Prostate gland (tissue), 2 donors: ENCODE measurements at regions of chr11 and their contacts with region 1.

Region 1: GRCh38 chr11:19679952-19680828 is 32.4 kb upstream of the NAV2 start:
- DNase-seq: peak; percentile 77
- H3K4me3 ChIP-seq: no peak overlapping the region
- H3K27ac ChIP-seq: peak overlapping the region; percentile 61 to 64
- H3K4me1 ChIP-seq: no peaks in the 10 kb centered on the region
- H3K27me3 ChIP-seq: no peaks in the 10 kb centered on the region
- CTCF ChIP-seq: peak in 1 of 4 experiments; percentile 47
- POLR2A ChIP-seq: peak; percentile 36

Region 2: DNA sequence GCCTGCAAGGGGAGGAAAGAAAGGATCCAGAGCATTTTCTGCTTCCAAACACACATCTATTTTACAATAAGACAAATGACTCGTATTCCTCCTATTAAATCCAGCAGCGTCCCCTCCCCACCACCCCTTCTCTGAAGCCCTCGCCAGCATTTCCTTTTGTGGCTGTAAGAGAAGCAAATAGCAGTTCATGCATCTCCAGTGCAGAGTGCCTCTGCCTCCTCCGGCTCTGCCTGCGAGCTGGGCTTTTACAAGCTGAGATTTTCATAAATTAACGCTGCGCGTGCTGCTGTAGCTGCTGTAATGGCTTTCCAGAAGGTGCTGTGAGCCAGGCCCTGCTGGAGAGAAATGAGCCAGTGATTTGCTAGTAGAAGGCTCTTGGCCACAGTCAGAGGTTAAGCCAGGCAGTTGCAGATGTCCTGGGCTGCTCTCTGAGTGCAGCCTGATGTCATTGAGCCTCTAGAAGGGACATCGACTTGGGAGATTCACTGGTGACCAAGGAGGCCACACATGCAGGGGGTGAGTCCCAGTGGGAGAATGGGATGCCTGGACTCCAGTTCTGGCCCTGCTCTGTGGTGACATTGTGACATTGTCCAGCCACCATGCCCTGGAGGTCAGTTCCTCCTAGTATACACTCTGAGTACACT is 102.1 kb before region 1 on chr11:
- intact Hi-C with region 1: loop called (anchors 5 kb)
- DNase-seq: peak; percentile 58
- H3K4me3 ChIP-seq: no peak overlapping the region
- H3K27ac ChIP-seq: peak overlapping the region; percentile 72 to 78
- H3K4me1 ChIP-seq: peaks cover 9% of the 10 kb centered on the region
- H3K27me3 ChIP-seq: no peaks in the 10 kb centered on the region
- CTCF ChIP-seq: no peak
- POLR2A ChIP-seq: no peak

Region 3: DNA sequence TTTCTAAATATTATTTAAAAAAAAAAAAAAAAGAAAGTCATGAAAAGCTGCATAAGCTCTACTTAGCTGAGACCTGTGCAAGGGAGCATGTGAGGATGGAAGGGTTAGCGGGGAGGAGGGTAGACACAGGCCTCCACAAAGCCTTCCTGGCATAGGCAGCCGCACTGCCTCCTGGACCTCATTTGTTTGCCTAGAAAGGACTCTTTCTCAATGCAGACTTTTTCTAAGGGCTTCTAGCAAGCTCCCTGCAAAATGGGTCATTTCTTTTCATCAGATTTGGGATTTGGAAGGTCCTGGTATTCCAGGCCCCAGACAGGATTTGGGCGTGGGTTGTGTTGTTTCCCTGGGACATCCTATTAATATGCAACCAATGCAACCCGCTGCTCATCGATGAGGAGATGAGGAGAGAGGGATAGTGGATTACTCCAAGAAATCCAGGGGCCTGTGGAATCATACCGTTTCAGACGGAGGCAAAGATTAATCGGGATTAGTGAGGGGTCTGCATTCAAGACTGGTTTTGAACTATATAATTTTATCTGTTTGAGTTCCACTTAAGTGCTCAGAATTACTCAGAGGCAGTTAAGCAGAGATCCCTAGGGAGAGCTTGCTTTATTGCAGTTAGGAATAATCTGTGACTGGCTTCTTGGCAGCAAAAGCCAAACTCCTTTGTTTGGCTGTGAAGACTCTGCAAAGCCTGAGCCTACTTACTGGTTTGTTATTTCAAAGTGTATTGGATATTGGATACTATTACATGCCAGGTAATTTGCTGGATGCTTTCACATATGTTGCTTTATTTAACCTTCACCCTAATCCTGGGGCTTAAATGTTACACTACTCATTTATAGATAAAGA is 74.4 kb before region 1 on chr11:
- intact Hi-C with region 1: loop called (anchors 5 kb)
- DNase-seq: peak; percentile 30
- H3K4me3 ChIP-seq: no peak overlapping the region
- H3K27ac ChIP-seq: peak overlapping the region; percentile 68 to 74
- H3K4me1 ChIP-seq: peaks cover 25% of the 10 kb centered on the region
- H3K27me3 ChIP-seq: no peaks in the 10 kb centered on the region
- CTCF ChIP-seq: no peak
- POLR2A ChIP-seq: no peak

Region 4: DNA sequence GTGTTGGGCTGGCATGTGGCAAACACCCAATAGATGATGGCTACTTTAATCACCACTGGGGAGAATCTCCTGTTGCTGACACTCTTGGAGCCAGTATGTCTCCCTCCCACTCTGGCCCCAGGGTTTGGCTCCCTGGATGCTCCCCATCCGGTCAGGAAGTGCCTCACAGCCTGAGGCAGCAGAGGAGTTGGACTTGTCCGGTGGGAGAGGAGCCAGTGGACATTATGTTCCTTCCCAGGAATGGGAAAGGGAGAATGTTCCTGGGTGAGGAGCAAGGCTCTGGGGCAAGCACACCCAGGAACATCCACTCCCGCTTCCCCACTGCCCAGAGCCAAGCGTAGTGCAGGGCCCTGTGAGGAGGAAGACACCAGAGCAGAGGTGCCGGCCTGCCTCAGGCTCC is 52.2 kb before region 1 on chr11:
- intact Hi-C with region 1: loop called (anchors 5 kb)
- DNase-seq: peak; percentile 46
- H3K4me3 ChIP-seq: no peak overlapping the region
- H3K27ac ChIP-seq: peak overlapping the region; percentile 44 to 57
- H3K4me1 ChIP-seq: no peaks in the 10 kb centered on the region
- H3K27me3 ChIP-seq: no peaks in the 10 kb centered on the region
- CTCF ChIP-seq: peak in 1 of 4 experiments; percentile 3
- POLR2A ChIP-seq: no peak

Region 5: DNA sequence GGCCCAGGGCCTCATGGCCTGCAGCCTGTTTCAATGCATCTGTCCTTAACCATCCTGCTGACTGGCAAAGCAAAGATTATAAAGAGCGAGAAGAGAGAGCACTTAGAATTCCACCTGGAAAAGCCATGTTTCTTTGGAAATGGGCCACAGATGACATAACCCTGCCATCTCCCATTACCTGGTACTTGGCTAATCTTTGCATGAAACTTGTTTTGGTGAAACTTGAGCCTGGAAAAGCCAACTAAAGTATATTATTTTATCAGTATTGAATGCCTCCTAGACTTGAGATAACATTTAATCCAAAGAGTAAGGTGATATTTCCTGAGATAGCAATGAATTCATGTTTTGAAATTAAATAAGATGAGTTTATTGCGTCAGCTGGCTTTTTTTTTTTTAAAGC is 105.1 kb after region 1 on chr11:
- intact Hi-C with region 1: no loop called
- DNase-seq: no peak
- H3K4me3 ChIP-seq: no peak overlapping the region
- H3K27ac ChIP-seq: no peak overlapping the region
- H3K4me1 ChIP-seq: no peaks in the 10 kb centered on the region
- H3K27me3 ChIP-seq: no peaks in the 10 kb centered on the region
- CTCF ChIP-seq: no peak
- POLR2A ChIP-seq: no peak